H1 (cell line): ENCODE measurements at regions of chr5 and their contacts with region 1.

Region 1: DNA sequence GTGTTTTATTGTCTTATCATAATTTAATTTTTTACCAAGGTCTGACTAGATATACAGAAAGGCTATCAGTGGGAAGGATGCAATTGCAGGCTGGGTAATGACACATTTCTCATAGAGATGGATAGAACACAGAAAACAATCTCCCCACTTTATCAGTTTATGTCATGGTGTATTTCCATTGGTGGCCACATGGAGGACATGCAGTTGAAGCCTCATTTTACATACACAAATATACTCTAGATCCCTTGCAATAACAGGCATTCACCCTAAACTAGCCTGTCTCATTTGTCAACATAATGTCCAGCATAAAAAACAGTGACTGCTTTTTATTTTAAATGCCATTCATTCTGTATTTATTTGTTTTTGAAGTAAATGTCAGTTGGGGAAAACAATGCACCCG is 526.3 kb downstream of the GABRG2 start:
- DNase-seq: no peak
- H3K4me3 ChIP-seq: no peak overlapping the region
- H3K27ac ChIP-seq: no peak overlapping the region
- H3K4me1 ChIP-seq: no peaks in the 10 kb centered on the region
- H3K27me3 ChIP-seq: no peaks in the 10 kb centered on the region
- CTCF ChIP-seq: peak in 1 of 3 experiments; percentile 49; a peak in 1 of 4 replicates
- EP300 ChIP-seq: no peak
- POLR2A ChIP-seq: no peak
- RAD21 ChIP-seq: peak; percentile 28 to 39; a peak in 3 of 4 replicates

Region 2: GRCh38 chr5:162607879-162608278 is 14.0 kb after region 1 on chr5:
- CTCF ChIA-PET with region 1: interaction called, 21 read pairs
- POLR2A ChIA-PET with region 1: no interaction called
- DNase-seq: no peak
- H3K4me3 ChIP-seq: no peak overlapping the region
- H3K27ac ChIP-seq: no peak overlapping the region
- H3K4me1 ChIP-seq: no peaks in the 10 kb centered on the region
- H3K27me3 ChIP-seq: no peaks in the 10 kb centered on the region
- CTCF ChIP-seq: peak in 2 of 3 experiments; percentile 7 to 38; a peak in 2 of 4 replicates
- EP300 ChIP-seq: no peak
- POLR2A ChIP-seq: no peak
- RAD21 ChIP-seq: 0 out of 4 replicates have a peak, but pooled peaks of 1 of the 2 experiments have one; percentile 6